ENCODE measurements at regions of chr2 and their contacts with region 1.

Region 1: DNA sequence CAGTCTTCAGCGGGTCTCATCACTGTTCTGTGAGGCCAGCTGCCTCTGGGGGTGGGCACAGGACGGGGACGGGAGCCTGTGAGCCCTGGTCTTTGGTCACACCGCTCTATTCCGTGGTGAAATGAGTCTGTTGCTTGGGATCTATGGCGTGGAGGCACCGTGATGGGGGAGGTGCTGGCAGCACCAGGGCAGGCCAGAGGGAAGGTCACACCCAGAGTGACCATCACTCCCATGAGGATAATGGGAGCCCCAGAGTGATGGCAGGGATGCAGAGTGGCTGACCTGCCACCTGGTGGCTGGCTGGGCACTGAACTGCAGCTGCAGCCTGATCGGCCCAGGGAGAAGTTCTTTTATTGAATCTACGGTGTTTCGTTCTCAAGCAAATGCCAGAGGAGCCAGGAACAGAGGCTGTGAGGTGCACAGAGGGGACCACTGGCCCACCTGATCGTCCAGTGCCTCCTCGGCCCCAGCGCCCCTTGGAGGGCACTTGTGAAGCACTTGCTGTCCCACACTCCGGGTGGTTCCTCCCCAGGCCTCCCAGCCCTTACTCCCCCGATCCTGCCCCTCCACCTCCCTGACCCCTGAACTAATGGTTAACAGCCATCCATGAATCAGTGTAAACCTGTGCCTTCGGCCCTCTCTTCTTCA is 17.9 kb downstream of the KCNIP3 start:
- DNase-seq: peak in 9 of 10 donors; percentile 42 to 84 (median 75)
- H3K4me3 ChIP-seq: peak overlapping the region in 4 of 59 donors; percentile 4 to 16 (median 11)
- H3K27ac ChIP-seq: peak overlapping the region in 57 of 59 donors; percentile 42 to 99 (median 79)
- H3K27me3 ChIP-seq: no peaks in the 10 kb centered on the region
- CTCF ChIP-seq: peak; percentile 46 to 95 (median 83)

Region 2: DNA sequence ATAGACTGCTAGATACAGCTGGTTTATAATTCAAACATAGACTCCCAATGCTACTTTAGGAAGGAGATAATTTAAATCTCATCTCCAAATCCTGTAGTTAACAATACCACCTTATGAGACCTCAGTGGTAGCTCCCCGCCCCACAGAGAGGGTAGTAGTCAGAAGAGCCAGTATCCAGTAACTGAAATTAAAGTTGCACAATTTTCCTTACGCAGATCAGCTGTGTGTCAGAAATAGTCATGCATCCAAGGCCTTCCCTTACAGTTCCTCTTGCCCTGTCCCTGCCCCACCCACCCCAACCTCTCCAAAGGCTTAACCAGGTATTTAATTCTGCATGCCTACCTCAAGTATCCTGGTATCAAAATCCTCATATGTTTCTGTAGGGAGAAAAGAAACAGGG is 209.0 kb before region 1 on chr2:
- intact Hi-C with region 1: no loop called
- DNase-seq: no peak
- H3K4me3 ChIP-seq: no peak overlapping the region
- H3K27ac ChIP-seq: no peak overlapping the region
- H3K27me3 ChIP-seq: no peaks in the 10 kb centered on the region
- CTCF ChIP-seq: no peak

Region 3: DNA sequence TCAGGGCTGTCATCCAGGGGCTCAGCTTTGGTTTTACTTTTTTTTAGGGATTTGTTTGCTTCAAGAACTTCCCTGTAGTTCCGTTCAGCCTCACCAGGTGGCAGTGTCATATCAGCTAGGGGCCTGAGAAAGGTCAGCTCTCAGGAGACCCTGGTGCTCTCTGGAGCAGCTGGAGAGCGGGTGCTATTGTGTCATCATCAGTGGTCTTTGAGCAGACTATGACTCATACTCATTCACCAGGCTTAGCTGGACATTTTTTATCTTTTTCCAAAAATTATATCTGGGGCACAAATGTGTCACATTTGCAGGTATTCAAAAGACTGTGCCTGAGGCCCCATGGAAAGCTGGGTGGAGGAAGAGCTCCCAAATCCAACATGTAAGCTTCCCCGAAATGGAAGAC is 83.4 kb before region 1 on chr2:
- intact Hi-C with region 1: loop called (anchors 1 kb)
- DNase-seq: peak; percentile 32 to 83 (median 68)
- H3K4me3 ChIP-seq: no peak overlapping the region
- H3K27ac ChIP-seq: peak overlapping the region in 3 of 59 donors; percentile 1 to 27 (median 14)
- H3K27me3 ChIP-seq: no peaks in the 10 kb centered on the region
- CTCF ChIP-seq: peak; percentile 51 to 93 (median 84)

Region 4: GRCh38 chr2:95264624-95265023 is 50.5 kb before region 1 on chr2:
- intact Hi-C with region 1: loop called in 1 of 2 experiments (anchors 1 kb)
- DNase-seq: peak in 9 of 10 donors; percentile 38 to 75 (median 62)
- H3K4me3 ChIP-seq: no peak overlapping the region
- H3K27ac ChIP-seq: peak overlapping the region in 55 of 59 donors; percentile 3 to 86 (median 74)
- H3K27me3 ChIP-seq: no peaks in the 10 kb centered on the region
- CTCF ChIP-seq: peak in 46 of 56 donors; percentile 7 to 59 (median 34)

Region 5: DNA sequence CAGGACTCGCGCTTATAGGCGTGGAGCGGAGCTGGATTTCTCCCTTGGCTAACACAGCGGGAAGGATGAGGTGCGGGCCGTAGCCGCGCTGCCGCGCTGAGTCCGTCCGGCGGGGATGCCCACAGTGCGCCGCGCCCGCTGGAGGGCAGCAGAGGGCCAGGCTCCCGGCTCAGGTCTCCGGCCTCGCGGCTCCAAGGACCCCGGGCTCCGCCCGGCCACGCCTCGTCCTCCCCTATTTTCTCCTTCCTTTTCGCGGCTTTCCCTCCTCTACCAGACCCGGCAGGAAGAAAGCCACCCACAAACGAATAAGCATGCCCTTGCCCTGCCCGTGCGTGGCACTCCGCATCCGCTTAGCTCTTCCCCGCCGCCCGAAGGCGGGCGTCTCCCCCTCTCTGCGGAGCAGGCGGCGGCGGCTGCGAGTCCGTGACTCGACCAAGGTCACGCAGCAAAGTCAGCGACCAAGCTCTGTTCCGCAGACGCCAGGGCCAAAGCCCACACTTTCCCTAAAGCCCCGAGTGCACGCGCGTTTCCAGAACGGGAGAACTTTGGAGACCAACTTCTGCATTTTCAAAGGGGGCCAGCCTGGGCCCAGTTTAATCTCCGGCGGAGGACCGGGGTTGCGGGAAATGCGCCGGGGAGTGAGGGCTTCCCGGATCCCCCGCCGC is 30.6 kb after region 1 on chr2:
- intact Hi-C with region 1: loop called in 1 of 2 experiments (anchors 2 kb)
- DNase-seq: peak; percentile 66 to 88 (median 76)
- H3K4me3 ChIP-seq: peak overlapping the region; percentile 37 to 77 (median 65)
- H3K27ac ChIP-seq: peak overlapping the region in 45 of 59 donors; percentile 4 to 79 (median 59)
- H3K27me3 ChIP-seq: peaks cover 0 to 2% (median 0%) of the 10 kb centered on the region in 45 donors
- CTCF ChIP-seq: peak; percentile 55 to 90 (median 78)